AG04449 (cell line): ENCODE measurements at regions of chr3 and their contacts with region 1.

Region 1: GRCh38 chr3:12613250-12613649 is 50.7 kb downstream of the RAF1 start:
- DNase-seq: no peak
- H3K4me3 ChIP-seq: no peak overlapping the region
- CTCF ChIP-seq: no peak

Region 2: DNA sequence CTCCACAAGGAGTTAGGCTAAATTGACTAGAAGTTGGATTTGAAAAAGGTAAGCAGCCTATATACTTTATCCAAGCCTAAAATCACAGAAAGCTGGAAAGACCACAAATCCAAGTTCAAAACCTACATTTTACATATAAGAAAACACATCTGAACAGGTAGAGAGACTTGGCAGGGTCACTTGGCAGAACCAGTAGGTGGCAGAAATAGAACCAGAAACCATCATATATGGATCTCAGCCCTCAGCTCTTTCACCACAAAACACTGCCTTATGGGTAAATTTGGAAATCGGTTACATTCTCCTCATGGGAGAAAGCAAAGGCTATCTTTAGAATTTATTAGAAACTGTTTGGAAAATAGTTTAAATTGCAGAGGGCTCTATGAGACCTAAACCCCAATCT is 12.2 kb before region 1 on chr3:
- CTCF ChIA-PET with region 1: interaction called, 11 read pairs
- POLR2A ChIA-PET with region 1: no interaction called
- DNase-seq: no peak
- H3K4me3 ChIP-seq: no peak overlapping the region
- CTCF ChIP-seq: no peak